PC-9 (cell line): ENCODE measurements at regions of chr20 and their contacts with region 1.

Region 1: GRCh38 chr20:48635433-48636310 is 192.1 kb downstream of the PREX1 start:
- DNase-seq: peak; percentile 50 to 77
- H3K4me3 ChIP-seq: no peak overlapping the region
- H3K27ac ChIP-seq: no peak overlapping the region
- H3K4me1 ChIP-seq: peaks cover 15% of the 10 kb centered on the region
- H3K27me3 ChIP-seq: no peaks in the 10 kb centered on the region
- CTCF ChIP-seq: peak; percentile 98

Region 2: DNA sequence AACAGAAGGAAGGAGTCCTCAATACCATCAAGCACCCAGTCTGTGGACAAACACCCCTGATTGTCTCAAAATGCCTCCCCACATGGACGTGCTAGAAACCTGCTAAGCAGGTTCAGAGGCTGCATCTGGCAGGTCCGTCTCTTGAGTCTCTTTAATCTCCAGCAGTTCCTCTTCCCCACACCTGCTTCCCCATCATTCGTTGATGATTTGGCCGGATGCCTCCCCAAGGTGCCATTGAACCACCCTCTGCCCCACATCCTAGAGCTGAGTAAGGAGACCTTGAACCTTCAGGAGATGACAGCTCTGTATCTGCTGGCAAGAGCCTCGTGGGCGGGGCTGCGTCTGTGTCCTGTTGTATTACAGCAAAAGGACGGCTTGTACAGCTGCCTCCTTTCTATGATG is 12.9 kb after region 1 on chr20:
- CTCF ChIA-PET with region 1: no interaction called
- POLR2A ChIA-PET with region 1: no interaction called
- intact Hi-C with region 1: loop called (anchors 1 kb)
- DNase-seq: peak; percentile 50 to 74
- H3K4me3 ChIP-seq: no peak overlapping the region
- H3K27ac ChIP-seq: no peak overlapping the region
- H3K4me1 ChIP-seq: peaks cover 12% of the 10 kb centered on the region
- H3K27me3 ChIP-seq: no peaks in the 10 kb centered on the region
- CTCF ChIP-seq: no peak

Region 3: GRCh38 chr20:48986899-48987298 is 351.2 kb after region 1 on chr20:
- CTCF ChIA-PET with region 1: no interaction called
- POLR2A ChIA-PET with region 1: no interaction called
- intact Hi-C with region 1: loop called (anchors 5 kb)
- DNase-seq: no peak
- H3K4me3 ChIP-seq: no peak overlapping the region
- H3K27ac ChIP-seq: no peak overlapping the region
- H3K4me1 ChIP-seq: peaks cover 18% of the 10 kb centered on the region
- H3K27me3 ChIP-seq: no peaks in the 10 kb centered on the region
- CTCF ChIP-seq: peak; percentile 65

Region 4: DNA sequence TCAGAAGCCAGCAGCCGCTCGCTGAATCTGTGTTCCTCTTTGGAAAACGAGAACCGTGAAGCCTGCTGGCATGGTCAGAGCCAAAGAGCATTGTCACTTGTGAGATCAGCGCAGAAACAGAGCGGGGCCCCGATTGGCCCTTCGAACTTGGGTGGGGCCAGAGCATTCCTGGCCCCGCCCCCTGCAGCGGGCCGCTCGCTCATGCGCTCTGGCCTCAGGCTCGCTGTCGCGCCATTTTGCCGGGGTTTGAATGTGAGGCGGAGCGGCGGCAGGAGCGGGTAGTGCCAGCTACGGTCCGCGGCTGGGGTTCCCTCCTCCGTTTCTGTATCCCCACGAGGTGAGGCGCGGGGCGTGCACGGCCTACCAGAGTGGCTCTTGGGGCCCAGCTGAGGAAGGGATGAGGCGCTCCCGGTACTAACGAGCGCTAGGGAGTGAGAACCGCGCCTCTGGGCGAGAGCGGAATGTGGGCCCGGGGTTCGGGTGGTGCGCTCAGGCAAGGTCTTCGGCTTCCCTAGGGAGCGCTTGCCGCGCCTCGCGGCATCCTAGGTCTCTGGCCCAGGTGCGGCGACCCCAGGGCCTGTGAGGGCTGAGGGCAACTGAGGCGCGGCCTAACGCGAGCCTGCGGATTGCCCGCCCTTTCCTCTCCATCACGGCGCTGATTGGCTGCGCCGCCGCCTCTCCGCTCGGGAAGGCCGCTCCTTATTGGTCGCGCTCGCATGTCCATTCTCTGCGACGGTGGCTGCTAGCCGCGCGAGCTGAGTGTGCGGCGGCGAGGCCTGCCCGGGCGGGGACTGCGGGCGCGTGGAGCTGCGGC is 410.6 kb after region 1 on chr20 and contains the start of gene CSE1L:
- CTCF ChIA-PET with region 1: no interaction called
- POLR2A ChIA-PET with region 1: no interaction called
- intact Hi-C with region 1: loop called (anchors 10 kb)
- DNase-seq: peak; percentile 85 to 96
- H3K4me3 ChIP-seq: peak within 1 kb of the TSS; percentile 96
- H3K27ac ChIP-seq: peak within 1 kb of the TSS; percentile 62
- H3K4me1 ChIP-seq: peaks cover 19% of the 10 kb centered on the region
- H3K27me3 ChIP-seq: no peaks in the 10 kb centered on the region
- CTCF ChIP-seq: no peak; the same call in 1 of the 2 replicates
- total RNA-seq, gene CSE1L: 83.1 and 132 TPM in 2 replicates

Region 5: DNA sequence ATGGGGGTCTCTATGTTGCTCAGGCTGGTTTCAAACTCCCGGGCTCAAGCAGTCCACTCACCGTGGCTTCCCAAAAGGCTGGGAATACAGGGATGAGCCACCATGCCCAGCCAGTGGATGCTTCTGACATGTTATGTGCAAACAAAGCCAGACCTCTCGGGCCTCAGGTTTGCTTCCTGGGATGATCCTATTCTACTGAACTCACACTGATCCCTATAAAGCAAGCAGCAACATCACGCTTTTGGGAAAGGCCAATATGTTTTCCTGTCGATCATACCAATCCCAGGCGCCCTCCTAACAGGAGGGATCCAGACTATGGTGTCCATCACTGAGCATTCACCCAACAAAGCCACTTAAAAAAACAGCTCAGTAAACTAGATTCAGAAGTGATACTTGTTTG is 470.7 kb after region 1 on chr20:
- CTCF ChIA-PET with region 1: no interaction called
- POLR2A ChIA-PET with region 1: no interaction called
- intact Hi-C with region 1: loop called (anchors 5 kb)
- DNase-seq: no peak
- H3K4me3 ChIP-seq: no peak overlapping the region
- H3K27ac ChIP-seq: peak overlapping the region; percentile 0; the same call in 1 of the 2 replicates
- H3K4me1 ChIP-seq: no peaks in the 10 kb centered on the region
- H3K27me3 ChIP-seq: no peaks in the 10 kb centered on the region
- CTCF ChIP-seq: no peak